PC-3 (cell line): ENCODE measurements at regions of chr2 and their contacts with region 1.

Region 1: DNA sequence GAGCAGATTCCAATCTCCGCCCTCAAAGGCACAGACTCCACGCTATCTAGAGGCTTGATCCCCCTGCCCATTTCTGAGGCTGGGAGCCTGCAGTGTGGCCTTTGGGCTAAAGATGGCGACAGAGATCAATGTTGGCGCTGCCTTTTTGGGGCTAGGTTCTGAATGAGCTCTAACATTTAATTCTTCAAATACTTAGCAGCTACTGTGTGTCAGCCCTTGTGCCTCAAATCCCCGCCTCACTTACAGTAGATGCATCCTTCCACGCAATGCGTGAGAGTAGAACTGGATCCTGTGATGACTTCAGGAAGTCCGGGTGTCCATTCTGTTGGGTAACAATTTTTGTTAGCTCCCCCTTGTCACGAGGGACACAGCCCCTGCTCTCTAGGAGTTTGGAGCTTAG is 12.4 kb downstream of the IL1F10 start:
- DNase-seq: peak; percentile 73
- ATAC-seq: peak; percentile 5; the same call in 1 of the 2 replicates
- H3K4me3 ChIP-seq: no peak overlapping the region
- H3K27ac ChIP-seq: peak overlapping the region; percentile 99
- H3K4me1 ChIP-seq: peaks cover 32% of the 10 kb centered on the region
- H3K27me3 ChIP-seq: no peaks in the 10 kb centered on the region
- CTCF ChIP-seq: peak; percentile 86

Region 2: GRCh38 chr2:112972423-112973086 is 107.6 kb before region 1 on chr2:
- CTCF ChIA-PET with region 1: no interaction called
- POLR2A ChIA-PET with region 1: no interaction called
- intact Hi-C with region 1: loop called (anchors 5 kb)
- DNase-seq: peak; percentile 64
- ATAC-seq: peak; percentile 29; the same call in 1 of the 2 replicates
- H3K4me3 ChIP-seq: no peak overlapping the region
- H3K27ac ChIP-seq: peak overlapping the region; percentile 67
- H3K4me1 ChIP-seq: peaks cover 19% of the 10 kb centered on the region
- H3K27me3 ChIP-seq: no peaks in the 10 kb centered on the region
- CTCF ChIP-seq: no peak

Region 3: DNA sequence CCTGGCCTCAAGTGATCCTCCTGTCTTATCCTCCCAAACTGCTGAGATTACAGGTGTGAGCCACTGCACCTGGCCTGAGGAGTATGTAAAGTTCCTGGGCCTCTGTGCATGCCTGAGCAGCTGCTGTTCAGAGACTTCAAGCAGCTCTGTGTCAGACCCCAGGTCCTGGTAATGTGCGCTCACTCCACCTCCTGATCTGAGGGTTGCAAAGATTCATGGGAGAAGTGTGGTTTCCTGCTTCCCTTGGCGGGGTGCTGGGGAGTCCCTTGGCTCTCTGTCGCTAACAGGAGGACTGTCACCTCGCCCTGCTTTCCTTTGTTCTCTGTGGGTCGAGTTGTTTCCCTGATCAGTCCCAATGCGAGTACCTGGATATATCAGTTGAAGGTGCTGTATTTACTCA is 83.5 kb before region 1 on chr2:
- CTCF ChIA-PET with region 1: no interaction called
- POLR2A ChIA-PET with region 1: no interaction called
- intact Hi-C with region 1: no loop called
- DNase-seq: no peak
- ATAC-seq: no peak
- H3K4me3 ChIP-seq: no peak overlapping the region
- H3K27ac ChIP-seq: no peak overlapping the region
- H3K4me1 ChIP-seq: no peaks in the 10 kb centered on the region
- H3K27me3 ChIP-seq: no peaks in the 10 kb centered on the region
- CTCF ChIP-seq: no peak

Region 4: DNA sequence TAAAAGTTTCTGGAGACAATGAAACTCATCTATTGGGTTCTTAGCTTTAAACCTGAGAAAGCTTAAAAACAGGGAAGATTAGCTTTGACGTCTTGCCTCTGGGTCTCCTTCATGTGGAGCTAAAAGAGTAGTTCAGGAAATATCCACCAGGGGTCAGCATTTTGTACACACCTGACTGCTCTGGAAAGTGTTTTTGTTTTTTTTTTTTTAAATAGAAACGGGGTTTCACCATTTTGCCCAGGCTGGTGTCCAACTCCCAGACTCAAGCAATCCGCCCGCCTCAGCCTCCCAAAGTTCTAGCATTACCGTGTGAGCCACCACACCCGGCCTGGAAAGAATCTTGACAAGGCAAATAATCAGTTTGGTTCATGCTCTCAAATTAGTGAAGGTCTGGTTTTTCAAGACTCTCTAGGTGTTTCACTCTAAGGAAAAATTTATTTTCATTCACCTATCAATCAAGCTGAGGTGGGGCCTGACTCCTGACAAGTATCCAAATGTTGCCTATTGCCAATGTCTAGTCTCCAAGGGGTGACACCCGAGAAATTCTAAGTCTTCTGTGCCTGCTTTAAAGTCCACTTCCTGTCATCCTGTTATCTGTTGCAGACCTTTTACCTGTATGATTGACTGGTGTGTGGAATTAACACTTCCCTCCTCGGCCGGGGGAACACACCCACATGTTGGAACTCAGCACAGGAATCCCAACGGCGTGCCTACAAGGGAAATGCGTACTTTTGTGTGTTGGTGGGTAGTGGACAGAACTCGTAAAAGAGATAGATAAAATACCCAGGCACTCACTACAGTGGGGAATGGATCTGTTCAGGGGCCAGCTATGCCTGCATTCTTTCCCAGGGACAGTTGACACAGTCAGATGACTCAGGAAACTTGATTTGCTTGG is 58.5 kb after region 1 on chr2:
- CTCF ChIA-PET with region 1: interaction called, 29 read pairs
- POLR2A ChIA-PET with region 1: no interaction called
- intact Hi-C with region 1: loop called (anchors 1 kb)
- DNase-seq: peak; percentile 91
- ATAC-seq: peak; percentile 47
- H3K4me3 ChIP-seq: peak overlapping the region; percentile 36; the same call in 1 of the 2 replicates
- H3K27ac ChIP-seq: 0 out of 2 replicates have a peak overlapping the region, but pooled peaks have one; percentile 0
- H3K4me1 ChIP-seq: peaks cover 17% of the 10 kb centered on the region
- H3K27me3 ChIP-seq: no peaks in the 10 kb centered on the region
- CTCF ChIP-seq: peak; percentile 86

Region 5: DNA sequence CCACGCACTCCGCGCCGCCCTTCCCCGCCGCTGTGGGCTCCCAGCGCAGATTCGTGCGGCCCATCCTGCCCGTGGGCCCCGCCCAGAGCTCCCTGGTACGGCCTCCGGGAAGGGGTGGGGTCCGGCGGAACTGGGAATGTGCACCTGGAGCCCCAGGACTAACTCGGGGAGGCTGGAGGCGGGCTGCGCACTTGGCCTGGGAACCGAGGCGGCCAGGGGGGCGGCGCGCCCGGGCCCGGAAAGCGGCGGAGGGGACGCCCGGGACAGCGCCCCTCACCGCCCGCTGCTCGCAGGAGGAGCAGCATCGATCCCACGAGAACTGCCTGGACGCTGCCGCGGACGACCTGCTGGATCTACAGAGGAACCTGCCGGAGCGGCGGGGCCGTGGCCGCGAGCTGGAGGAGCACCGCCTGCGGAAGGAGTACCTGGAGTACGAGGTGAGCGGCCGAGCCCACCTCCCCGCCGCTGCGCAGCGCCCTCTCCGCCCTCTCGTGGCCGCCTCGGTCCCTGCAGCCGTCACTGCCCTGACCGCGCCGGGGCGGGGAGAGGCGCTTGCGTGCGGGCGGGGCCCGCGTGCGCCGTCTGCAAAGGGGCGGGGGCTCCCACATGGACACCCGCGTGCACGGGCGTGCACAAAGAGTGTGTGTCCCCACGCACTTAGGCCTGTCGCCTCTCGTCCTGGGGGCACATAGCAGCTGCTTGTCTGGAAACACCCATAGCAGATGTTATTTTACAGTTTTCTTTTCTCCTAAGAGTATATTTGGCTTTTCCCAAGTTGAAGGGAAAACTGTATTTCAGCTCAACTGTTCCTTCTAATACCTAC is 118.9 kb after region 1 on chr2:
- CTCF ChIA-PET with region 1: interaction called, 28 read pairs
- POLR2A ChIA-PET with region 1: interaction called, 6 read pairs
- intact Hi-C with region 1: loop called (anchors 1 kb)
- DNase-seq: peak; percentile 95
- ATAC-seq: peak; percentile 82
- H3K4me3 ChIP-seq: peak overlapping the region; percentile 78
- H3K27ac ChIP-seq: peak overlapping the region; percentile 80
- H3K4me1 ChIP-seq: peaks cover 15% of the 10 kb centered on the region
- H3K27me3 ChIP-seq: no peaks in the 10 kb centered on the region
- CTCF ChIP-seq: peak; percentile 86

Region 6: DNA sequence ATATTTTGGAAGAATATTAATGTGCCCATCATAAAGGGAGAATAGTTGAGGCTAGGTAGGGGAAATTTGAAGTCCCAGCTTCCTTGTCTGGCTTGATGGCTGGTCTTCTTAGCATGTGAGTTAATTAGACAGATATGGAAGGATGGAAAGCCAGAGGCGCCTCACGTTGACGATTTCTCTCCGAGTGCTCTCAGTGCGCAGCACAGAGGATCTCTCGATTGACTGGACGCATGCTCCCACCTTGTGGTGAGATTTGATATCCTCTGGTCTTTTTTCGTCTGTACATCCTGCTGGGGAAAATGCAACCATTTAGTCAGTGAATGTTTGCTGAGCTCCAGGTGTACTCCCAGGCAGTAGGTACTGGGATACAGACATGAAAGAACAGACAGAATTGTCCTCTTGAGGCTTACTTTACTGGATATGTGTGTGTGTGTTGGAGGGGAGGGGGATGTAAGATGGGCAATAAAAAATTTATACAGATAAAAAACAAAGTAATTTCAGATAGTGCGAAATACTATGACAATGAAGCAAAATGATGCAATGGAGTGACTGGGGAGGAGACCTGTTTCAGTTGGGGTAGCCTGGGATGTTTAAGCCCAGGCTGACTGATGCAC is 290.5 kb after region 1 on chr2:
- CTCF ChIA-PET with region 1: no interaction called
- POLR2A ChIA-PET with region 1: no interaction called
- intact Hi-C with region 1: loop called (anchors 5 kb)
- DNase-seq: peak; percentile 92
- ATAC-seq: peak; percentile 99
- H3K4me3 ChIP-seq: no peak overlapping the region
- H3K27ac ChIP-seq: no peak overlapping the region
- H3K4me1 ChIP-seq: peaks cover 20% of the 10 kb centered on the region
- H3K27me3 ChIP-seq: no peaks in the 10 kb centered on the region
- CTCF ChIP-seq: peak; percentile 75